Psoas muscle (tissue), 8 donors: ENCODE measurements at regions of chr3 and their contacts with region 1.

Region 1: DNA sequence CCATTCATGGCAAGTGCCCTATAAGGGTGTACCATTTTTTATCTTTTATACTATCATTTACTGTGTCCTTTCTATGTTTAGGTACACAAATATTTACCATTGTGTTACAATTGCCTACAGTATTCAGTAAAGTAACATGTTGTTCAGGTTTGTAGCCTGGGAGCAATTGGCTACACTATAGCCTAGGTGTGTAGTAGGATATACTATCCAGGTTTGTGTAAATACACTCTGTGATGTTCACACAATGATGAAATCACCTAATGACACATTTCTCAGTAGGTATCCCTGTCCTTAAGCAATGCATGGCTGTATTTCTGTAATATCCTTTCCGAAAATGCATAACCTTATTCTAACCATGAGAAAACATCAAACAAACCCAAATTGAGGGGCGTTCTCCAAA is 17.9 kb upstream of the CNOT10 start:
- DNase-seq: no peak
- ATAC-seq: no peak
- H3K4me3 ChIP-seq: no peak overlapping the region
- H3K27ac ChIP-seq: no peak overlapping the region
- H3K4me1 ChIP-seq: no peaks in the 10 kb centered on the region
- H3K27me3 ChIP-seq: no peaks in the 10 kb centered on the region
- CTCF ChIP-seq: no peak

Region 2: GRCh38 chr3:32374788-32375595 is 292.1 kb before region 1 on chr3:
- intact Hi-C with region 1: loop called in 1 of 2 experiments (anchors 5 kb)
- DNase-seq: no peak
- ATAC-seq: peak; percentile 58 to 76 (median 59)
- H3K4me3 ChIP-seq: no peak overlapping the region
- H3K27ac ChIP-seq: no peak overlapping the region
- H3K4me1 ChIP-seq: no peaks in the 10 kb centered on the region
- H3K27me3 ChIP-seq: no peaks in the 10 kb centered on the region
- CTCF ChIP-seq: peak; percentile 75

Region 3: DNA sequence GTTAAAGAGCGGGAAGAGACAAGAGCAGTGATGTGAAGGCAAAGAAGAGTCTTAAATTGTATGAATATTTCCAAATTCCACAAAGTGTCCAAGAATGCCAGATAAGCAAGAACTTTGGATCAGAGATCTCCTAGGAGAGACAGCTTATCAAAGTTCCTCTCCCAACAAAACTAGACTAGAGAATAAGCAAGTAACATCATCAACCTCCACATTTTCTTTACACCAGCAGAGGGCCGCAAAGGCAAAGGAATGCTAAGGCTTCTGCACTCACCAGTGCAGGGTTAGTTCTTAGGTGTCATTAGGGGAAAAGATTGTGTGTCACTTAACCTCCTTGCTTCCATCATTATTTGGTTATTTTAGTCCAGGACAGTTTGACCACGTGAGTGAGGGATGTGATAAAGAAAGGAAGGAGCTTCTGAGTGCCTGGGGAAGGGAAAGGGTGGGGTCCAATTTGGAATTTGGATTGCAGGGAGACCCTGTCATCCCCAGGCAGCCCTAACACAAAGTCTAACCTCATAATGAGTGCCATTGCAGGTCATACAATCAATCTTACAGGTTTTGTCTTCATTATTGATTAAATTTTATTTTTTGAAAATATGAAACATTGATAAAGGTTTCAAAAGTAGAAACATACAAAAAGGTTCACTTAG is 156.9 kb before region 1 on chr3:
- intact Hi-C with region 1: loop called (anchors 2 to 5 kb)
- DNase-seq: peak in 1 of 2 donors; percentile 41
- ATAC-seq: peak; percentile 83 to 98 (median 89)
- H3K4me3 ChIP-seq: no peak overlapping the region
- H3K27ac ChIP-seq: no peak overlapping the region
- H3K4me1 ChIP-seq: no peaks in the 10 kb centered on the region
- H3K27me3 ChIP-seq: no peaks in the 10 kb centered on the region
- CTCF ChIP-seq: peak; percentile 79